K562 (cell line): ENCODE measurements at regions of chr12 and their contacts with region 1.

Region 1: GRCh38 chr12:111775205-111776193 is 8.8 kb downstream of the ALDH2 start:
- DNase-seq: peak; percentile 67 to 91 (median 73)
- ATAC-seq: peak; percentile 89
- H3K4me3 ChIP-seq: peak overlapping the region; percentile 31
- H3K27ac ChIP-seq: peak overlapping the region; percentile 90
- H3K4me1 ChIP-seq: peaks cover 28 to 36% of the 10 kb centered on the region in 2 experiments
- H3K27me3 ChIP-seq: no peaks in the 10 kb centered on the region
- CTCF ChIP-seq: no peak
- EP300 ChIP-seq: no peak; the same call in 1 of the 2 replicates
- POLR2A ChIP-seq: peak; percentile 69
- RAD21 ChIP-seq: 0 out of 4 replicates have a peak, but pooled peaks of 1 of the 2 experiments have one; percentile 6

Region 2: DNA sequence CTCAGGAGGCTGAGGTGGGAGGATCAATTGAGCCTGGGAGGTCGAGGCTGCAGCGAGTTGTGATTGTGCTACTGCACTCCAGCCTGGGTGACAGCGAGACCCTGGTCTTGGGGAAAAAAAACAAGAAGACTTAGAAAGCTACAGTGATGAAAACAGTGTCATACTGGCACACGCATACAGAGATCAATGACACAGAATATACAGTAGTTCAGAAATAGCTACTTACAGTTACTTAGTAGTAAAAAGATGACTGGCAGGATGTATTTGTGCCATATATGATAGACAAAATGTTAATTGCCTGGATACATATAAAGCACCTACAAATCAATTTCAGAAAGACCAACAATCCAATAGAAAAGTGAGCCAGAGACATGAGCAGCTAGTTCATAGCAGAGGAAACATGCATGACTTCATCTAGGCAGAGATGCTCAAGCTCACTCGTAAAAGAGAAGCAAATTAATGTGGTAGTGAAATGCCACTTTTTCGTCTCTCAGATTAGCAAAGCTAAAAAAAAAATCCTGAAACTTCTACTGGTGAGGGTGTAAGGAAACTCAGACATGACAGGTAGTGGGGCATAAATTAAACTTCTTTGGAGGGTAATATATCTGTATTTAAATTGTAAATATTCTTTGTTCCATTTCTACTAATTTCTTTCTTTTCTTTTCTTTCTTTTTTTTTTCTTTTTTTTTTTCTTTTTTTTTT is 11.2 kb before region 1 on chr12:
- CTCF ChIA-PET with region 1: no interaction called
- POLR2A ChIA-PET with region 1: interaction called, 14 read pairs
- in situ Hi-C with region 1: no loop called
- intact Hi-C with region 1: no loop called
- DNase-seq: no peak
- ATAC-seq: no peak
- H3K4me3 ChIP-seq: no peak overlapping the region
- H3K27ac ChIP-seq: no peak overlapping the region
- H3K4me1 ChIP-seq: peaks cover 20 to 22% of the 10 kb centered on the region in 2 experiments
- H3K27me3 ChIP-seq: no peaks in the 10 kb centered on the region
- CTCF ChIP-seq: no peak
- EP300 ChIP-seq: no peak
- POLR2A ChIP-seq: no peak
- RAD21 ChIP-seq: no peak

Region 3: DNA sequence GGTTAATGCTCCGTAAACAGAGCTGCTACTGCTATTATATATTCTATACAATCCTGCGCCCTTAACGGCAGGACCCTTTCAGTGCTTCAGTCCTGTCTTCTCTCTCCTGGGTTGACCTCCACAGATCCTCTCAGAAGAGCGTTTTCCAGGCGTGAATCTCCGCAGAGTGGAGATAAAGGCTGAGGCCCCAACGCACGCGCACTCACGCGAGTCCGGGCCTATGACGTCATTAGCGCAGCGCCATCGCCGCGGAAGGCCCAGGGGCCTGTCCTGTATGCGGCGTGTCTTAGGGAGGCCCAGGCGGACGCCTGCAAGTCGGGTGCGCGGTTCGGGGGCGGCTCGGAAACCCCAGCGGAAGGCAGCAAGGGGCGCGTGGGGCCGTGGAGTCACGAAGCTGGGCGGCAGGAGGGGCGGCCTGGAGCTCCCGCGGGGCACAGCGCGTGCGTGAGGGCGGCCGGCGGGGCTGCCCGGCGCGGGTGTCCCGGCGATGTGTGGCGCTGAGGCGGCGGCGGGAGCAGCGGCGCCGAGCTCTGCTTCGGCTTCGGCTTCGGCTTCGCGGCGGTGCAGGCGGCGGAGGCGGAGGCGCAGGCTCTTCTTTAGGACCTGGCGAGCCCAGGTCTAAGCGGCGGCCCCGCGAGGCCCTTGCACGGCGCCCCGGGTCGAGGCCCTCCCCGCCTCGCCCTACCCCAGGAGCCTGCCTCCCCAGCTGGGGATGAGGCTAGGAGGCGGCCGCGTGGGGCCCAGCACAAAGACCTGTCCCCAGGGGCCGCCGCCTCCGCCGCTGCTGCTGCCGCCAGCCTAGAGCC is 66.5 kb after region 1 on chr12 and contains the start of gene MAPKAPK5:
- CTCF ChIA-PET with region 1: no interaction called
- POLR2A ChIA-PET with region 1: no interaction called
- in situ Hi-C with region 1: no loop called
- intact Hi-C with region 1: loop called (anchors 2 kb)
- DNase-seq: peak; percentile 95 to 99 (median 97)
- ATAC-seq: peak; percentile 80
- H3K4me3 ChIP-seq: peak within 1 kb of the TSS; percentile 85
- H3K27ac ChIP-seq: peak within 1 kb of the TSS; percentile 98
- H3K4me1 ChIP-seq: peaks cover 23 to 36% of the 10 kb centered on the region in 2 experiments; a peak in 4 of 5 replicates
- H3K27me3 ChIP-seq: no peaks in the 10 kb centered on the region
- CTCF ChIP-seq: no peak
- EP300 ChIP-seq: peak; percentile 43; the same call in 1 of the 2 replicates
- POLR2A ChIP-seq: peak; percentile 83
- RAD21 ChIP-seq: no peak
- polyA plus RNA-seq, gene MAPKAPK5: 11.6 to 17.7 TPM